CD4-positive, alpha-beta memory T cell (primary cell): ENCODE measurements at regions of chr12 and their contacts with region 1.

Region 1: GRCh38 chr12:49366652-49367380 is 446 bp upstream of the SPATS2 start:
- DNase-seq: peak; percentile 78 to 85 (median 83)
- H3K4me3 ChIP-seq: peak overlapping the region; percentile 55 to 88
- H3K4me3 Mint-ChIP-seq: peak overlapping the region; percentile 82 to 98 (median 96)
- H3K27ac ChIP-seq: peak overlapping the region; percentile 84
- H3K27ac Mint-ChIP-seq: peak overlapping the region; percentile 93 to 98 (median 96)
- H3K4me1 ChIP-seq: peaks cover 19% of the 10 kb centered on the region
- H3K4me1 Mint-ChIP-seq: peaks cover 17 to 37% (median 24%) of the 10 kb centered on the region in 4 donors
- H3K27me3 ChIP-seq: no peaks in the 10 kb centered on the region
- H3K27me3 Mint-ChIP-seq: peaks cover 0 to 1% of the 10 kb centered on the region in 2 donors

Region 2: GRCh38 chr12:49342066-49342913 is 24.5 kb before region 1 on chr12:
- CTCF ChIA-PET with region 1: interaction called, 17 read pairs
- POLR2A ChIA-PET with region 1: interaction called, 15 read pairs
- intact Hi-C with region 1: no loop called
- DNase-seq: peak; percentile 60 to 75 (median 64)
- H3K4me3 ChIP-seq: peak overlapping the region; percentile 30 to 53
- H3K4me3 Mint-ChIP-seq: peak overlapping the region; percentile 49 to 89 (median 78)
- H3K27ac ChIP-seq: no peak overlapping the region
- H3K27ac Mint-ChIP-seq: peak overlapping the region in 4 of 7 donors; percentile 55 to 79 (median 65)
- H3K4me1 ChIP-seq: peaks cover 52% of the 10 kb centered on the region
- H3K4me1 Mint-ChIP-seq: peaks cover 19 to 64% (median 40%) of the 10 kb centered on the region in 4 donors
- H3K27me3 ChIP-seq: peaks cover 47% of the 10 kb centered on the region
- H3K27me3 Mint-ChIP-seq: peaks cover 25 to 56% of the 10 kb centered on the region in 2 donors

Region 3: GRCh38 chr12:49413796-49414195 is 47.0 kb after region 1 on chr12:
- CTCF ChIA-PET with region 1: no interaction called
- POLR2A ChIA-PET with region 1: no interaction called
- intact Hi-C with region 1: no loop called
- DNase-seq: no peak
- H3K4me3 ChIP-seq: no peak overlapping the region
- H3K4me3 Mint-ChIP-seq: no peak overlapping the region
- H3K27ac ChIP-seq: no peak overlapping the region
- H3K27ac Mint-ChIP-seq: no peak overlapping the region
- H3K4me1 ChIP-seq: no peaks in the 10 kb centered on the region
- H3K4me1 Mint-ChIP-seq: peaks cover 0 to 2% (median 0%) of the 10 kb centered on the region in 4 donors
- H3K27me3 ChIP-seq: no peaks in the 10 kb centered on the region
- H3K27me3 Mint-ChIP-seq: no peaks in the 10 kb centered on the region

Region 4: GRCh38 chr12:49515266-49515665 is 148.4 kb after region 1 on chr12:
- CTCF ChIA-PET with region 1: interaction called, 538 read pairs
- POLR2A ChIA-PET with region 1: interaction called, 6 read pairs
- intact Hi-C with region 1: no loop called
- DNase-seq: no peak
- H3K4me3 ChIP-seq: no peak overlapping the region
- H3K4me3 Mint-ChIP-seq: no peak overlapping the region
- H3K27ac ChIP-seq: no peak overlapping the region
- H3K27ac Mint-ChIP-seq: no peak overlapping the region
- H3K4me1 ChIP-seq: no peaks in the 10 kb centered on the region
- H3K4me1 Mint-ChIP-seq: no peaks in the 10 kb centered on the region
- H3K27me3 ChIP-seq: no peaks in the 10 kb centered on the region
- H3K27me3 Mint-ChIP-seq: no peaks in the 10 kb centered on the region

Region 5: GRCh38 chr12:49567611-49568441 is 201.0 kb after region 1 on chr12 and contains the start of gene MCRS1:
- CTCF ChIA-PET with region 1: no interaction called
- POLR2A ChIA-PET with region 1: interaction called, 14 read pairs
- intact Hi-C with region 1: loop called (anchors 5 kb)
- DNase-seq: peak; percentile 92 to 94 (median 93)
- H3K4me3 ChIP-seq: peak within 1 kb of the TSS; percentile 88 to 100
- H3K4me3 Mint-ChIP-seq: peak within 1 kb of the TSS; percentile 92 to 100 (median 99)
- H3K27ac ChIP-seq: peak within 1 kb of the TSS; percentile 89
- H3K27ac Mint-ChIP-seq: peak within 1 kb of the TSS; percentile 93 to 100 (median 99)
- H3K4me1 ChIP-seq: peaks cover 49% of the 10 kb centered on the region
- H3K4me1 Mint-ChIP-seq: peaks cover 32 to 71% (median 54%) of the 10 kb centered on the region in 4 donors
- H3K27me3 ChIP-seq: no peaks in the 10 kb centered on the region
- H3K27me3 Mint-ChIP-seq: no peaks in the 10 kb centered on the region
- total RNA-seq, gene MCRS1: 77.0 to 78.4 TPM

Region 6: DNA sequence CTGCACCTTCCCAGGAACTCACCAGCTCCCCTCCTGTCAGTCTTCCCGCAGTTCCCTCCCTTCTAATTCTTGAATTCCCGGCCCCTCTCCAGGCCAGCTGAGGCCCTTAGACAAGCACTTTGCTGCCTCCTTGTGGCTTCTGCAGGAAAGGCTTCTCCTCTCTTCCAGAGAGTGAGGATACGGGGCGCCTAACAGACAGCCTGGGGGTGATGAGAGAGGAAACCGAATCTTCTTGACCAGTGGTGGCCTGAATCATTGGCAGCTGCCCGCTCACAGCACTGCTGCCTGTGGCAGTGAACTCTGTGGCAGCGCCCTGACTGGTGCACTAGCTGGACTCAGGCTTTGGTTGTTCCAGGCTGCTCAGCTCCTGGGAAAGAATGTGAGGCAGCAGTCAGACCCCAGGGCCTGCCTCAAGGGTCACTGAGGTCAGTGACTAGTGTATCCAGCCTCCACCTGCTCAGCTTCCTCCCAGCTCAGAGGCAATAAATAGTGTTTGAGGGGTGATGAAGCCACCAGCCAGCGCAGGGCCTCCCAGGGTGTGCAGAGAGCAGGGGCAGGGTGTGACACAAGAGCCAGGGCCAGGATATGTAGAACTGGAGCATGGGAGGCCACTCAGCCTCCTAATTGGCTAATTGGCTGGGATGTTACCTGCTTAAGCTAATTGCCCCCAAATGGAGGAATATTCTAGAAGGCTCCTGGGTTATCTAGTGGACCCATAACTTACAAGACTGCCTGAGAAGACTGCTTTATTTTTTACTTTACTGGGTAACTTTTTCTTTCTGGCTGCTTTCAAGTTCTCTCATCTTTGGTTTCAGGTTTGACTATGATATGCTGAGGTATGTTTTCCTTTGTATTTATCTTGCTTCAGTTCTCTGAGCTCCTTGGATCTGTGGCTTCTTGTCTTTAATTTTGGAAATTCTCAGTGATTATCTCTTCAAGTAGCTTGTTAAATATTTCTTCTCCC is 214.0 kb after region 1 on chr12:
- CTCF ChIA-PET with region 1: no interaction called
- POLR2A ChIA-PET with region 1: no interaction called
- intact Hi-C with region 1: no loop called
- DNase-seq: peak in 4 of 5 donors; percentile 32 to 57 (median 48)
- H3K4me3 ChIP-seq: no peak overlapping the region
- H3K4me3 Mint-ChIP-seq: no peak overlapping the region
- H3K27ac ChIP-seq: no peak overlapping the region
- H3K27ac Mint-ChIP-seq: peak overlapping the region in 3 of 7 donors; percentile 3 to 61 (median 4)
- H3K4me1 ChIP-seq: no peaks in the 10 kb centered on the region
- H3K4me1 Mint-ChIP-seq: peaks cover 0 to 7% (median 5%) of the 10 kb centered on the region in 4 donors
- H3K27me3 ChIP-seq: no peaks in the 10 kb centered on the region
- H3K27me3 Mint-ChIP-seq: no peaks in the 10 kb centered on the region